A549 (cell line): ENCODE measurements at regions of chr20 and their contacts with region 1.

Region 1: GRCh38 chr20:56554869-56555268 is 21.8 kb downstream of the FAM209B start:
- DNase-seq: peak; percentile 77 to 92
- ATAC-seq: peak; percentile 88 to 91
- H3K4me3 ChIP-seq: no peak overlapping the region
- H3K27ac ChIP-seq: no peak overlapping the region; a peak in 1 of 6 replicates
- H3K4me1 ChIP-seq: peaks cover 19% of the 10 kb centered on the region
- CTCF ChIP-seq: no peak
- EP300 ChIP-seq: no peak
- POLR2A ChIP-seq: no peak
- RAD21 ChIP-seq: 0 out of 5 replicates have a peak, but pooled peaks of 1 of the 2 experiments have one; percentile 19

Region 2: GRCh38 chr20:56527521-56527920 is 27.3 kb before region 1 on chr20:
- CTCF ChIA-PET with region 1: interaction called, 15 read pairs
- POLR2A ChIA-PET with region 1: no interaction called
- DNase-seq: no peak
- ATAC-seq: no peak
- H3K4me3 ChIP-seq: no peak overlapping the region
- H3K27ac ChIP-seq: no peak overlapping the region
- H3K4me1 ChIP-seq: no peaks in the 10 kb centered on the region
- CTCF ChIP-seq: no peak
- EP300 ChIP-seq: no peak
- POLR2A ChIP-seq: no peak
- RAD21 ChIP-seq: no peak

Region 3: DNA sequence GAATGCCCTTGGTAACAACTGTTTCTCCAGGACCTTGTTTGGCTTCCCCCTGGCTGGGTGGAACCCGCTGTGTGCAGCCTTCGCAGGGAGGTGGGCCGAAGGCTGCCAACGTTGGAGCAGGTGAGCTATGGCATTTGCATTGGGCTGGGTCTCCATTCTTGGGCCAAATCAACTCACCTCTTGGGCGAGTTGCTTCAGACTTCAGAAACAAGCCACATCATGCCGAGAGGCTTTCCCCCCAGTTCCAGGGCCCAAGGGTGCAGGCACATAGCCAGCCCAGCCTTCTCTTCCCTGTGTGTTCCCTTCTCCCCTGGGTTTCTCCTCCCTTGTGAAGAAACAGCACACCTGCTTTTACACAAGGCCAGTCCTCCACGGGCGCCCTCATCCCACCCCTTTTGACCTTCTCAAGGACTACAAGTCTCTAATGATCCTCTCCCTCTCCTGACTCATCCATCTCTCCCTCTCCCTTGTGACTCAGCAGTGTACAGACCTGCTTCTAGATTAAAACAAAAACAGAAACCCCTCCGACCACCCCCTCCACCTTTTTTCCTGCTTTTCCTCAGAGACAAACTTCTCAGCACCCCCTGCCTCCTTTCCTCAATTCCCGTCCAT is 19.8 kb after region 1 on chr20:
- CTCF ChIA-PET with region 1: interaction called, 94 read pairs
- POLR2A ChIA-PET with region 1: no interaction called
- DNase-seq: no peak
- ATAC-seq: peak; percentile 17 to 37; a peak in 2 of 6 replicates
- H3K4me3 ChIP-seq: no peak overlapping the region
- H3K27ac ChIP-seq: no peak overlapping the region
- H3K4me1 ChIP-seq: no peaks in the 10 kb centered on the region
- CTCF ChIP-seq: no peak
- EP300 ChIP-seq: no peak
- POLR2A ChIP-seq: no peak
- RAD21 ChIP-seq: no peak

Region 4: DNA sequence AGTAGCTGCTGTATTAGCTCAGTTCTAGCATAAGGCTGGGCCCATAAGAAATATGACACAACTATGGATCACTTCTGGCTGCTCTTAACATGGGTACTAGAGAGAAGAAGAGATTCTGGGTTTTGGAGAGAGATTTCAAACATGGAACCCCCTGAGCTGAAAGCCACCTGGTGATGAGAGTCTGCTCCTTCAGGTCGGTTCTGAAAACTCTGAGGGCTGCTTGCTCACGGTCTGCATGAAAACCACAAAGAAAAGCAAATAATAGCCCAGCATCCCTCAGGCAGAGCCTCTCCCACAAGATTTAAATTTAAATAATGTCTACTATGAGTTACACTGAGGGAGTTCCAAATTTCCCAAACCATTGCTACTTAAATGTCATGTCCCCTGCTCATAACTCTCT is 410.0 kb after region 1 on chr20:
- CTCF ChIA-PET with region 1: interaction called, 10 read pairs
- POLR2A ChIA-PET with region 1: no interaction called
- DNase-seq: no peak
- ATAC-seq: no peak; a peak in 1 of 6 replicates
- H3K4me3 ChIP-seq: no peak overlapping the region
- H3K27ac ChIP-seq: no peak overlapping the region
- H3K4me1 ChIP-seq: no peaks in the 10 kb centered on the region
- CTCF ChIP-seq: no peak
- EP300 ChIP-seq: no peak
- POLR2A ChIP-seq: no peak
- RAD21 ChIP-seq: no peak

Region 5: DNA sequence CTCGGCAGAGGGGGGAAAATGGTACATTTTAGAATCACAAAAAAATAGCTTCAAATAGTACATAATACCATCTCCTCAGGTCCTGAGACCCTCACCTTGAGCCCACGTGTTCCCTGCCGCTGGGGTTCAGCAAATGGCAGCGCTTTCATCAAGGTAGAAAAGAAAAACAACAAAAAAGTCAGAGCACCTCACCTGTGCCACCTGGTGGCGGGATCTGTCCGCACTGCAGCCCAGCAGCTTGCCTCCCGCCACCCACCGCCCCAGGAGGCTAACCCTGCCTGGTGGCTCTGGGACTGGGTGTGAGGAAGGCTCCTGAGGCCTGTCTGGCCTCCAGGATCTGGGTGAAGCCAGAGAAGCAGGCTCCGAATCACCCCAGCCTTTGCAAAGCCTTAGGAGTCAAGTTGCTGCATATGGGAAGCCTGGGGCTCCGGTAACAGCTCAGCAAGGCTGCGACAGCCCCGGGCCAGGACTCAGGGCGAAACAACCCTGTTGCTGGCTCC is 440.8 kb after region 1 on chr20:
- CTCF ChIA-PET with region 1: interaction called, 38 read pairs
- POLR2A ChIA-PET with region 1: no interaction called
- DNase-seq: peak; percentile 36 to 45
- ATAC-seq: peak; percentile 60 to 79; a peak in 4 of 6 replicates
- H3K4me3 ChIP-seq: no peak overlapping the region
- H3K27ac ChIP-seq: no peak overlapping the region
- H3K4me1 ChIP-seq: no peaks in the 10 kb centered on the region
- CTCF ChIP-seq: peak; percentile 52
- EP300 ChIP-seq: no peak
- POLR2A ChIP-seq: no peak
- RAD21 ChIP-seq: peak; percentile 56 to 58

Region 6: GRCh38 chr20:57048027-57048869 is 493.4 kb after region 1 on chr20:
- CTCF ChIA-PET with region 1: interaction called, 27 read pairs
- POLR2A ChIA-PET with region 1: no interaction called
- DNase-seq: peak; percentile 81 to 88
- ATAC-seq: peak; percentile 79 to 94
- H3K4me3 ChIP-seq: peak overlapping the region; percentile 27; the same call in 2 of the 3 replicates
- H3K27ac ChIP-seq: peak overlapping the region; percentile 61 to 74
- H3K4me1 ChIP-seq: peaks cover 22% of the 10 kb centered on the region
- CTCF ChIP-seq: peak; percentile 65
- EP300 ChIP-seq: no peak
- POLR2A ChIP-seq: no peak
- RAD21 ChIP-seq: peak; percentile 62 to 64

Region 7: GRCh38 chr20:57346477-57346876 is 791.6 kb after region 1 on chr20:
- CTCF ChIA-PET with region 1: interaction called, 31 read pairs
- POLR2A ChIA-PET with region 1: no interaction called
- DNase-seq: peak; percentile 32 to 69
- ATAC-seq: peak; percentile 75 to 82; a peak in 5 of 6 replicates
- H3K4me3 ChIP-seq: no peak overlapping the region
- H3K27ac ChIP-seq: no peak overlapping the region
- H3K4me1 ChIP-seq: no peaks in the 10 kb centered on the region
- CTCF ChIP-seq: peak; percentile 91
- EP300 ChIP-seq: no peak
- POLR2A ChIP-seq: no peak
- RAD21 ChIP-seq: peak; percentile 89 to 92